PC-3 (cell line): ENCODE measurements at regions of chr3 and their contacts with region 1.

Region 1: GRCh38 chr3:108489771-108490170 is 20.6 kb downstream of the MYH15 start:
- DNase-seq: peak; percentile 71
- ATAC-seq: peak; percentile 35; the same call in 1 of the 2 replicates
- H3K4me3 ChIP-seq: no peak overlapping the region
- H3K27ac ChIP-seq: no peak overlapping the region
- H3K4me1 ChIP-seq: peaks cover 16% of the 10 kb centered on the region
- H3K27me3 ChIP-seq: no peaks in the 10 kb centered on the region
- CTCF ChIP-seq: peak; percentile 94

Region 2: DNA sequence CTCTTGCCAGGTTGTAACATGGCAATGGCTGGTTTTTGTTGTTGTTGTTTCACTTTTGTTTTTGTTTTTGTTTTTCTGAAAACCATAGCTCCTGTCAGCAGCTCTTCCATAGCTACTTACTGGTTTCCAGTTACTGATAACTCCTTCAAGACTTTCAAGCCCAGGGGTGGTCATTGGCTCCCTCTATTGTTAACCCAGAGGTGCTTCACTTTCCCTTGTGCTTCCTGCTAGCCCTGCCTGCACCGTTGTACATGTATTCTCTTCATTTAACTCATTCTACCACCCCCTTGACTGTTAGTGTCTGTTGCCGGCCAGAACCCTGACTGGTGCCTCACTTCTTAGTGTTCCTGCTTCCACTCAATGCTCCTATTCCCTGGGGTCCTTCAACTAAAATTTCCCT is 328.6 kb after region 1 on chr3:
- CTCF ChIA-PET with region 1: no interaction called
- POLR2A ChIA-PET with region 1: no interaction called
- intact Hi-C with region 1: loop called (anchors 2 kb)
- DNase-seq: peak; percentile 61
- ATAC-seq: peak; percentile 94
- H3K4me3 ChIP-seq: no peak overlapping the region
- H3K27ac ChIP-seq: no peak overlapping the region
- H3K4me1 ChIP-seq: no peaks in the 10 kb centered on the region
- H3K27me3 ChIP-seq: peaks cover 40% of the 10 kb centered on the region
- CTCF ChIP-seq: peak; percentile 58

Region 3: DNA sequence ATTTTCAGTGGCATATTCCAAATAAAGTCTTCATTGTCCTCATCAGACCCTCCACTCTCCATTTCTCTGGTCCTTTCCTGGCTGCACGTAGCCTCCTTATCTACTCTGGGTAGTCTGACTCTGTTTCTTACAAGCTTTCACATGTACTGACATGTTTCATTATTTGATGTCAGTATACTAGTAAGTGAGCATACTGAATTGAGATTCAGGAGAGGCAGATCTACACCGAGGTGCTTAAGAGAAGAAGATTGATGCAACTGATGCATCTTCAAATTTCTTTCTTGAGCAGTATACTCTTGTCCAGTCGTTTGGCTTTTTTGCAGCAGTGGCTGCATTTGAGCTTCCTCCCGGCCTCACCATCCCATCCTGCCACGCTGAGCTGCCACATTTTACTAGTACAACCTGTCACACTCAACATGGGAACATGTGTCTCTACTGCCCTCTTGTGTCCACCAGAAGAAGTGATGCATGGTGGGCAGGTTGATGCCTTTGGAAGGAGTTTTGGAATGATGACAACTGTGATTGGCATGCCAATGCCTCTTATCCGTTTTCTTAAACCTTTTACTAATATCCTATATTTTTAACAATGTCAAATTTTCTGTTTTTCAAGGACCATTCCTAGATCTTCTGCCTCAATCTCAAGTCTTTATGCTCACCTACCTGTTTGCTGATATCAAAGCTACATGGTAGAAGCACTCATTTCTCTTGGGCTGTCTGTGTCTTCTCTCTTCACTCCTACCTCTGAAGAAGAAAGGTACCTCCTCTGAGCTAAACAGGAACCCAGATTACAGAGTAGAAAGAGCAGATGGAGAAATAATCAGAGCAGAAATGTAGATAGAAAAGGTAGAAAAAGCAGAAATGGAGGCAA is 425.2 kb after region 1 on chr3:
- CTCF ChIA-PET with region 1: interaction called, 6 read pairs
- POLR2A ChIA-PET with region 1: no interaction called
- intact Hi-C with region 1: loop called (anchors 1 kb)
- DNase-seq: peak; percentile 85
- ATAC-seq: peak; percentile 97
- H3K4me3 ChIP-seq: no peak overlapping the region
- H3K27ac ChIP-seq: no peak overlapping the region
- H3K4me1 ChIP-seq: no peaks in the 10 kb centered on the region
- H3K27me3 ChIP-seq: peaks cover 21% of the 10 kb centered on the region
- CTCF ChIP-seq: peak; percentile 92

Region 4: DNA sequence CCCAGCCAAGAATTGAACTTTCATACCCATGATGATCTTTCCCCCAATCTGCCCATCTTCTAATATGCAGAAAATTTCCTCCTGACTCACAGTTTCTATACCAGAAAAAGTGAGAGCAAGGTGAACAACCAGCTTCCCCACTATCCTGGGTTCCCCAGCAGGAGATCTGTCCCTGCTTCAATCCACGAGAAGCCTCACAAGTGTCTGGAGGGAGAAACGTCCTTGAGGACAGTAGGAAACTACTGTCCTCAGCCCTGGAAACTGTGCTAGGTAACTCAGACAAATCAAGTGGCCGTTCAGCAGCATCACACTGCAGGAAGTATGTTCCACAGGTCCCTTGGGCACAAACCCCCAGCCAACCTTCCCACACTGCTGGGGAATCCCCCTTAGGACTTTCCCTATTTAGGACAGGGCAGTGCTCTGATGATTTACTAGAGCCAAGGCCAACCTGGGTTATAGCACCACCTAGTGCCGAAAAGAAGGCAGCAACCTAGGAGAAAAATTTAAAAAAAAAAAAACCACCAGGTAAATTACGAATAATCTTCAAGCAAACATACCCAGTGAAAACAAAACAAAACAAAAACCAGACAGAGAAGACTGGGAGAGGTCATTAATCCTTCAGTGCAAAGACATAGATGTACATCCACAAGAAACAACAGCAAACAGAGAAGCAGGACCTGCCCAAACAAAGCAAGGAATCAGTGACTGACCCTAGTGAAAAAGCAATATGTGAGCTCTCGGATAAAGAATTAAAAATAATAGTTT is 592.2 kb after region 1 on chr3:
- CTCF ChIA-PET with region 1: no interaction called
- POLR2A ChIA-PET with region 1: no interaction called
- intact Hi-C with region 1: loop called (anchors 2 kb)
- DNase-seq: peak; percentile 57
- ATAC-seq: peak; percentile 68
- H3K4me3 ChIP-seq: no peak overlapping the region
- H3K27ac ChIP-seq: no peak overlapping the region
- H3K4me1 ChIP-seq: no peaks in the 10 kb centered on the region
- H3K27me3 ChIP-seq: peaks cover 34% of the 10 kb centered on the region
- CTCF ChIP-seq: peak; percentile 90